Naive thymus-derived CD4-positive, alpha-beta T cell (primary cell): ENCODE measurements at regions of chr6 and their contacts with region 1.

Region 1: DNA sequence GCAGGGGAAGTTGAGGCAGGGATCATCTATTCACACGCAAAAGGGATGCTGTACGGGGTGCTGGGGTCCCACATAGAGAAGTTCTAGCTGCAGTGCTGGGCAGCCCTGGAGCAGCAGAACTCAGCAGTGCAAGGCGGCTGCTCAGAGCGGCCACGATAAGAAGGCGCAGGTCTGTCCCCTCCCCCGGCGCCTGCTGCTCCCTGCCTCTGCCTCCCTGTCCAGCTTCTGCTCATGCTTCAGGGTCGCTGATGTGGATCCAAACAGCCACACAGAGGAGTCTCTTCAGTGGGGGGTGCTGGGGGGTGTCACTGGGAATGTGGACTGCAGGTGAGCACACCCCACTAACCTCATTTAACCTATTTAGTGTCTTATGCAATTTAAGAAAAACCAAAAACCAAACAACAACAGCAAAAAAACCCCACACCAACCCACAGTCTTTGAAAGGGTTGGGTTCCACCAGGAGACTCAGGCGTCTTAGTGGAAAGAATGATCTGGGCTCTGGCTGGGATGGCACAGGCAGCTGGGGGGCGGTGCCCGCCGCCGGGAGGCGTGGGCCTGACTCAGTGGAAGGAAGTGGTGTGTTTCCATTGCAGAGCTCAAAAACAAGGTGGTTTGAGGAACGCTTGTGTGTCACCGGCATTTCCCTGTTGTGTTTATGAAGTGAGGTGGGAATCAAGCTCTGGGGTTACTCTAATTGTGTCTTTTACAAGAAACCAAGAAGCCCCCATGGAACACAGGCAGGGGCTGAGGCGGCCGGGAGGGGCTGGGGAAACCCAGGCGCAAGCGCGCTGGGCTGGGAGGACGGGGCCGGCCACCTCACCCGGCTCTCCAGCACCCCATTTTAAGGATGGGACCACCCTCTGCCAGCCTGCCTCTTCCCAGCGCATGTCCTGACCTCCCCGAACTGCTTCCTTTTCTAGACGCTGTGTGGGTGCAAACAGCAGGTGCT is 55.1 kb downstream of the IRF4 start:
- DNase-seq: peak in 8 of 9 donors; percentile 51 to 95 (median 66)
- ATAC-seq: peak; percentile 73
- H3K4me3 ChIP-seq: peak overlapping the region; percentile 38
- H3K4me3 Mint-ChIP-seq: peak overlapping the region; percentile 34 to 76 (median 59)
- H3K27ac ChIP-seq: no peak overlapping the region
- H3K27ac Mint-ChIP-seq: peak overlapping the region; percentile 70 to 92 (median 80)
- H3K4me1 ChIP-seq: peaks cover 36 to 48% of the 10 kb centered on the region in 2 donors
- H3K4me1 Mint-ChIP-seq: peaks cover 40 to 57% (median 56%) of the 10 kb centered on the region in 7 donors
- H3K27me3 ChIP-seq: no peaks in the 10 kb centered on the region
- H3K27me3 Mint-ChIP-seq: peaks cover 0 to 2% (median 0%) of the 10 kb centered on the region in 5 donors

Region 2: DNA sequence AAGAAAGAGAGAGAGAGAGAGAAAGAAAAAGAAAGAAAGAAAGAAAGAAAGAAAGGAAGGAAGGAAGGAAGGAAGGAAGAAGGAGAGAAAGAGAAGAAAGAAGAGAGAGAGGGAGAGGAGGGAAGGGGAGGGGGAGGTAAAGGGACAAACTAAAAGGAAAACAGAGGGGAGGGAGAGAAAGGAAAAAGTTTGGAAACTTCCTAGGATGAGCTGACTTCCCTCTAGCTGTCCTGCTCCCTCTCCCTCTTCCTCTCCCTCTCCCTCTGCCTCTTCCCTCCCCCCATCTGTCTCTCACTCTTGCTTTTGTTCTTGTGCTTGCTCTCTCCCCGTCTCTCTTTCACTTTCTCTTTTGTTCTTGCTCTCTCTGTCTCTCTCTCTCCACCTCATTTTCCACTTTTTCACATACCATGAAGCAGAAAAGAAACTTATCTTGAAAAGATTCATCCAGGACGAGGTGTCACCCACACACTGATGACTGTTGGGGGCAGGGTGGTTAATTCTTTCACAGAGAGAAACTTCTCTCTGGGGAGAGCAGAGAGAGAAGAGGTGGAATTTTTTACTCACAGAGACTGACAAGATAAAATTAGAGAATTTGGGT is 210.8 kb before region 1 on chr6:
- CTCF ChIA-PET with region 1: no interaction called
- POLR2A ChIA-PET with region 1: no interaction called
- intact Hi-C with region 1: loop called in 1 of 2 experiments (anchors 2 kb)
- DNase-seq: peak in 8 of 9 donors; percentile 33 to 66 (median 60)
- ATAC-seq: peak; percentile 88
- H3K4me3 ChIP-seq: peak overlapping the region; percentile 41
- H3K4me3 Mint-ChIP-seq: peak overlapping the region; percentile 67 to 85 (median 79)
- H3K27ac ChIP-seq: peak overlapping the region; percentile 56
- H3K27ac Mint-ChIP-seq: peak overlapping the region; percentile 82 to 95 (median 88)
- H3K4me1 ChIP-seq: peaks cover 15 to 22% of the 10 kb centered on the region in 2 donors
- H3K4me1 Mint-ChIP-seq: peaks cover 19 to 45% (median 27%) of the 10 kb centered on the region in 7 donors
- H3K27me3 ChIP-seq: no peaks in the 10 kb centered on the region
- H3K27me3 Mint-ChIP-seq: no peaks in the 10 kb centered on the region

Region 3: DNA sequence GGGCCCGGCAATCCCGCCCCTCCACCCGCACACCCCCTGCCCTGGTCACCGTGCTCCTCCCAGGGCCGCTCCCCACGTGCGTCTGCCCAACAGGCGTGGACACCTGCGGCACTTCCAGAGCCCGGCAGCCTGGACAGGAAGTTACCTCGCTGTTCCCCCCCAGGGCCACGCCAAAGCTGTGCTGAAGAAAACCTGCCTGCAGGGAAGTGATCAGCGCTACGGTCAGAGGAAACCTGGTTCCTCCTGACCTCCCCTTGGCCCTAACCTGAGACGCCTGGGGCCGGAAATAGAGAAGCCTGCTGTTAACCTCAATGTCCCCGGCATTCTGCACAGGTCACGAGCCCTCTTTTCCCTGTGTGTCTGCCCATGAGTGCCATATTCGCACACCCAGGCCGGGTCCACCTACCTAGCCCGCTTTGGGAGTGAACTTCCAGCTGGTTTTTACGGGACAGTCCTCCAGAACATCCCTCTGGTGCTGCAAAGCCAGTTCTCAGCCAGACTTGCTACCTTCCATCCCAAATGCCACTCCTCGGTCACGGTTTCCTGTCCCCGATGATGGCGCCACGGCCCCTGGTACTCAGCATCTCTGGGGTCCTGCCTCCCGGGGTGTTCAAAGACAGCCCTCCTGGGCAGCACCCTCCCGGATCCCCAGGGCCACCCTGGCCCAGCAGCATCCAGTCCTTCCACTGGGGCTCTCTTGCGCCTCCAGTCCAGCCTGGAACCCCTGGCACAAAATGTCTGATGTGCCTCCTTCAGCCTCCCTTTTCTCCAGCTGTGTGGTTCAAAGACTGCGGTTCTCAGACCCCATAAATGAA is 67.1 kb before region 1 on chr6:
- CTCF ChIA-PET with region 1: no interaction called
- POLR2A ChIA-PET with region 1: no interaction called
- intact Hi-C with region 1: no loop called
- DNase-seq: no peak
- ATAC-seq: peak; percentile 25
- H3K4me3 ChIP-seq: no peak overlapping the region
- H3K4me3 Mint-ChIP-seq: peak overlapping the region in 1 of 10 donors; percentile 3
- H3K27ac ChIP-seq: no peak overlapping the region
- H3K27ac Mint-ChIP-seq: no peak overlapping the region
- H3K4me1 ChIP-seq: no peaks in the 10 kb centered on the region
- H3K4me1 Mint-ChIP-seq: peaks cover 5 to 20% (median 9%) of the 10 kb centered on the region in 7 donors
- H3K27me3 ChIP-seq: no peaks in the 10 kb centered on the region
- H3K27me3 Mint-ChIP-seq: peaks cover 11 to 57% (median 29%) of the 10 kb centered on the region in 5 donors

Region 4: DNA sequence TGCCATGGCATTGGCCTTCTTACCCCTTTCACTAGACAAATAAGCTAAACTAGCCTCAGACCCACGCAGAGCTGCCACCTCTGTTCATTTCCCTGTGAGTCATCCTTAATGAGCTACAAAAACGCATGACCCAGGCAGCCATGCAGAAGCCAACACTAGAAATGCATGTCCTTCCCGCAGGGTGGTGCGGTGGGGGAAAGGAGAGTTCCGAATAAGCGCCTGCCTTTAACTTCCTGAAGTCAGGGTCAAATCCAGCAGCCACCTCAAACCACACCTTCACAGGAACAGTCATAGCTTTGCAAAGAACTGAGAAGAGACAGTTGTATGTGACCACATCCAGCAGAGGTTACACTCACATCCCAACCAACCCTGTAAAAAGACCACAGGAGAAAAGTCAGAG is 14.7 kb before region 1 on chr6:
- CTCF ChIA-PET with region 1: no interaction called
- POLR2A ChIA-PET with region 1: interaction called, 6 read pairs
- intact Hi-C with region 1: loop called (anchors 1 to 2 kb)
- DNase-seq: peak in 1 of 9 donors; percentile 68
- ATAC-seq: no peak
- H3K4me3 ChIP-seq: no peak overlapping the region
- H3K4me3 Mint-ChIP-seq: peak overlapping the region in 1 of 10 donors; percentile 40
- H3K27ac ChIP-seq: no peak overlapping the region
- H3K27ac Mint-ChIP-seq: peak overlapping the region in 2 of 9 donors; percentile 76 to 82
- H3K4me1 ChIP-seq: peaks cover 9 to 12% of the 10 kb centered on the region in 2 donors
- H3K4me1 Mint-ChIP-seq: peaks cover 22 to 71% (median 36%) of the 10 kb centered on the region in 7 donors
- H3K27me3 ChIP-seq: no peaks in the 10 kb centered on the region
- H3K27me3 Mint-ChIP-seq: no peaks in the 10 kb centered on the region

Region 5: GRCh38 chr6:490251-491037 is 43.8 kb after region 1 on chr6:
- CTCF ChIA-PET with region 1: interaction called, 3 read pairs
- POLR2A ChIA-PET with region 1: interaction called, 8 read pairs
- intact Hi-C with region 1: loop called in 1 of 2 experiments (anchors 1 kb)
- DNase-seq: no peak
- ATAC-seq: peak; percentile 47
- H3K4me3 ChIP-seq: peak overlapping the region; percentile 25
- H3K4me3 Mint-ChIP-seq: peak overlapping the region; percentile 19 to 87 (median 70)
- H3K27ac ChIP-seq: no peak overlapping the region
- H3K27ac Mint-ChIP-seq: peak overlapping the region; percentile 54 to 98 (median 84)
- H3K4me1 ChIP-seq: peaks cover 60 to 65% of the 10 kb centered on the region in 2 donors
- H3K4me1 Mint-ChIP-seq: peaks cover 46 to 78% (median 70%) of the 10 kb centered on the region in 7 donors
- H3K27me3 ChIP-seq: no peaks in the 10 kb centered on the region
- H3K27me3 Mint-ChIP-seq: no peaks in the 10 kb centered on the region

Region 6: DNA sequence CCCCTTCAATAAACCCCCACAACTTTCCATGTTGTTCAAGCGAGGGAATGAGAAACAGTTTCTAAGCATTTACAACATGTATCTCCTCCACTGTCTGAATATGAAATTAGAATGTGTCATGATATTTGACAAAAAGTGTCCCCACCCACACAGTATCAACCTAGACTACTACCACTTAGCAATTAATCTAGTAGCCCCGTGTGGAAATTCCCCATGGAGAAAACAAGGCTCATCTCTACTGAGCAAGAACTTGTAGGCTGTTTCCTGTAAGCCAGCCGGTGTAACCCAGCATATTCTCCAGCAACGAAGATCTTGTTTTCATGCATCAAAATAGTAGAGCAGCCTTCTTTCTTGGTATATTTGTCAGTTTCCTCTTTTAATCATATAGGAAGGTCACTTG is 59.8 kb after region 1 on chr6:
- CTCF ChIA-PET with region 1: interaction called, 3 read pairs
- POLR2A ChIA-PET with region 1: interaction called, 7 read pairs
- intact Hi-C with region 1: loop called in 1 of 2 experiments (anchors 1 kb)
- DNase-seq: peak in 1 of 9 donors; percentile 35
- ATAC-seq: no peak
- H3K4me3 ChIP-seq: no peak overlapping the region
- H3K4me3 Mint-ChIP-seq: peak overlapping the region in 7 of 10 donors; percentile 25 to 61 (median 30)
- H3K27ac ChIP-seq: peak overlapping the region; percentile 5
- H3K27ac Mint-ChIP-seq: peak overlapping the region; percentile 32 to 89 (median 73)
- H3K4me1 ChIP-seq: peaks cover 21 to 42% of the 10 kb centered on the region in 2 donors
- H3K4me1 Mint-ChIP-seq: peaks cover 51 to 95% (median 85%) of the 10 kb centered on the region in 7 donors
- H3K27me3 ChIP-seq: no peaks in the 10 kb centered on the region
- H3K27me3 Mint-ChIP-seq: no peaks in the 10 kb centered on the region

Region 7: DNA sequence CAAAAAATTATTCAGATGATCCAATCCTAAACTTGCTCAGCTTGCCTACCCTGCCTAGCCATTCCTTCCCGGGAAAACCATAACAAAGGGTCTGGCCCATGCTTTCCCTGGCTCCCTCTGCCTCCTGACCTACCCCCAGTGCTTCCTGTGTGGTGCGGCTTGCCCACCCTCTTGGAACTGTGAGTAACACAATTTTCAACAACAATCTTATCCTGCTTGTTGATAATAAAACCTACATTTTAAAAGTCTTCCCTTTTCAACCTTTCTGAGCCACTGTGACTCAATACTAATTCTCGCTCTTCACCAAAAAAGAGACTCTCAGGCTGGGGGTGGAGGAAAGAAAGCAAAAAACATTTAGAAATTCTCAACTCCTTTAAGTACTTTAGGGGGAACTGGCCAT is 228.3 kb after region 1 on chr6:
- CTCF ChIA-PET with region 1: no interaction called
- POLR2A ChIA-PET with region 1: no interaction called
- intact Hi-C with region 1: no loop called
- DNase-seq: no peak
- ATAC-seq: no peak
- H3K4me3 ChIP-seq: no peak overlapping the region
- H3K4me3 Mint-ChIP-seq: no peak overlapping the region
- H3K27ac ChIP-seq: no peak overlapping the region
- H3K27ac Mint-ChIP-seq: peak overlapping the region in 1 of 9 donors; percentile 32
- H3K4me1 ChIP-seq: no peaks in the 10 kb centered on the region
- H3K4me1 Mint-ChIP-seq: peaks cover 17 to 41% (median 25%) of the 10 kb centered on the region in 7 donors
- H3K27me3 ChIP-seq: no peaks in the 10 kb centered on the region
- H3K27me3 Mint-ChIP-seq: no peaks in the 10 kb centered on the region

Region 8: GRCh38 chr6:710601-711571 is 264.2 kb after region 1 on chr6:
- CTCF ChIA-PET with region 1: no interaction called
- POLR2A ChIA-PET with region 1: no interaction called
- intact Hi-C with region 1: loop called in 1 of 2 experiments (anchors 2 kb)
- DNase-seq: peak; percentile 26 to 72 (median 63)
- ATAC-seq: peak; percentile 90
- H3K4me3 ChIP-seq: peak overlapping the region; percentile 69
- H3K4me3 Mint-ChIP-seq: peak overlapping the region; percentile 89 to 99 (median 98)
- H3K27ac ChIP-seq: peak overlapping the region; percentile 81
- H3K27ac Mint-ChIP-seq: peak overlapping the region; percentile 92 to 100 (median 99)
- H3K4me1 ChIP-seq: peaks cover 5 to 8% of the 10 kb centered on the region in 2 donors
- H3K4me1 Mint-ChIP-seq: peaks cover 8 to 42% (median 21%) of the 10 kb centered on the region in 7 donors
- H3K27me3 ChIP-seq: no peaks in the 10 kb centered on the region
- H3K27me3 Mint-ChIP-seq: peaks cover 0 to 13% (median 0%) of the 10 kb centered on the region in 5 donors